Calu3 (cell line): ENCODE measurements at regions of chr6 and their contacts with region 1.

Region 1: GRCh38 chr6:142387997-142388815 is 86.4 kb downstream of the ADGRG6 start:
- DNase-seq: no peak
- H3K4me3 Mint-ChIP-seq: no peak overlapping the region
- H3K27ac Mint-ChIP-seq: peak overlapping the region; percentile 42
- H3K4me1 Mint-ChIP-seq: no peaks in the 10 kb centered on the region
- H3K27me3 Mint-ChIP-seq: no peaks in the 10 kb centered on the region
- CTCF ChIP-seq: no peak

Region 2: DNA sequence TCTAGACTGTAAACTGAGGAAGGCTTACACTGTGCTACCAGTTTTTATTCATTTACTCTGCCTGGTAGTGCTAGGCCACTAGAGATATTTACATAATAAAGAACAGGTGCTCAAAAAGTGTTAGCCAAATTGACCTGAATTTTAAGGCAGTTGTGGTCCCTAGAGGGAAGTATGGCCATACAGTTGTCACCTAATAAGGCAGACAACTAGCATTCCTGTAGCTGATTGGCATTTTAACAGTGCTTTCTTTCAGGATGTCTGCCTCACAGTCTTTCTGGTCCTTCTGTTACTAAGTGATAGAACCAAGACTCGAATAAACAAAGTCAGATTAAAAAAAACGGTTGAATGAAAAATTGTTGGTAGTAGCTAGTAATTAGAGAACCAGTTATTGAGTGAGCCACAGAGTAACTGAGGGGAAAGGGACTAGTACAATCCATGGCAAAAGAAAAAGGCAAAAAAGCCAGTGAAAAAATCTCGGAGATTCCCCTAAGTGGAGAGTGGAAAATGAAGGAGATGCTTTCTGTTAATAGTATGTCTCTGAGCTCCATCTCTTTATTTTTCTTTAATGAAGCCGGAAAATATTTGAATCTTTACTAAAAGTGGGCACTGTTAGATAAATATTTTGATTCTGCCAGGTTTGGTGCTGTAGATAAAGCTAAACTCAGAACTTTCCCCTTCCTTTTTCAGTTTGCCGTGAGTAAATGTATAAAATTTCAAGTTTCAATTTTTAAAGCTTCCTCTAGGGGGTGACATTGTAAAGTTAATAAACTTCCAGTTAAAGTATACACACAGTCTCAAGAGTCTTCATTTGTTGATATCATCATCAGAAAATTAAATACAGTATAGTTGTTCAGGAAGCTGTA is 232.1 kb before region 1 on chr6:
- CTCF ChIA-PET with region 1: no interaction called
- intact Hi-C with region 1: loop called (anchors 2 kb)
- DNase-seq: no peak
- H3K4me3 Mint-ChIP-seq: peak overlapping the region; percentile 24
- H3K27ac Mint-ChIP-seq: no peak overlapping the region
- H3K4me1 Mint-ChIP-seq: peaks cover 9% of the 10 kb centered on the region
- H3K27me3 Mint-ChIP-seq: no peaks in the 10 kb centered on the region
- CTCF ChIP-seq: no peak

Region 3: DNA sequence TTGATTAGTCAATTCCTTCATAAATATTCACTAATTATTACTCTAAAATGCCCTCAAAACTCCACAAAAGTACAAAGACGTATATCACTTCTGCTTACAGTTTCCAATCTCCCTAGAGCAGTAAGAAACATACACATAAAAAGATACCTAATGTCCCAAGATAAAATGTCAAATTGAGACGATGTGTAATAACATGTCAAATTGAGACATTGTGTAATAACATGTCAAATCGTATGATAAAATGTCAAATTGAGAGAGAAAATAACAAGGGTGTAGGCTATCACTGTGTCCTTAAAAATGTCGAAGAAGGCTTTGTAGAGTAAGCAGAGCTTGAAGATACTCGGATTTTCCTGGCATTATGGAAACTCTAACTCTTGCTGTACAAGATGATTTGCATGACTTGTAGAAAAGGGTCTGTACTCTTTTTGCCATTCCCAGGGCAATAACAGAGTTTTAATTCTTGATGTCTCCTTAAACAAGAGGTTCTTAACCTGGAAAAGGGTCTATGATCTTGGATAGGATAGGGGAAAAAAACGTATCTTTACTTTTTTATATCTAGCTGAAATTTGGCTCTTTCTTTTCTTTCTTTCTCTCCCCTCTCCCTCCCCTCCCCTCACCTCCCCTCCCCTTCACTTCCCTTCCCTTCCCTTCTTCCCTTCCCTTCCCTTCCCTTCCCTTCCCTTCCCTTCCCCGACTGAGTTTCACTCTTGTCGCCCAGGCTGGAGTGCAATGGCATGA is 154.1 kb before region 1 on chr6:
- CTCF ChIA-PET with region 1: no interaction called
- intact Hi-C with region 1: loop called (anchors 2 kb)
- DNase-seq: no peak
- H3K4me3 Mint-ChIP-seq: no peak overlapping the region
- H3K27ac Mint-ChIP-seq: no peak overlapping the region
- H3K4me1 Mint-ChIP-seq: no peaks in the 10 kb centered on the region
- H3K27me3 Mint-ChIP-seq: no peaks in the 10 kb centered on the region
- CTCF ChIP-seq: no peak